Mammary epithelial cell (primary cell): ENCODE measurements at regions of chr2 and their contacts with region 1.

Region 1: GRCh38 chr2:10457911-10458604 is 9.9 kb upstream of the ODC1 start:
- DNase-seq: peak; percentile 90
- H3K4me3 ChIP-seq: no peak overlapping the region
- H3K27ac ChIP-seq: peak overlapping the region; percentile 56
- H3K4me1 ChIP-seq: peaks cover 36% of the 10 kb centered on the region
- H3K27me3 ChIP-seq: no peaks in the 10 kb centered on the region
- CTCF ChIP-seq: no peak

Region 2: DNA sequence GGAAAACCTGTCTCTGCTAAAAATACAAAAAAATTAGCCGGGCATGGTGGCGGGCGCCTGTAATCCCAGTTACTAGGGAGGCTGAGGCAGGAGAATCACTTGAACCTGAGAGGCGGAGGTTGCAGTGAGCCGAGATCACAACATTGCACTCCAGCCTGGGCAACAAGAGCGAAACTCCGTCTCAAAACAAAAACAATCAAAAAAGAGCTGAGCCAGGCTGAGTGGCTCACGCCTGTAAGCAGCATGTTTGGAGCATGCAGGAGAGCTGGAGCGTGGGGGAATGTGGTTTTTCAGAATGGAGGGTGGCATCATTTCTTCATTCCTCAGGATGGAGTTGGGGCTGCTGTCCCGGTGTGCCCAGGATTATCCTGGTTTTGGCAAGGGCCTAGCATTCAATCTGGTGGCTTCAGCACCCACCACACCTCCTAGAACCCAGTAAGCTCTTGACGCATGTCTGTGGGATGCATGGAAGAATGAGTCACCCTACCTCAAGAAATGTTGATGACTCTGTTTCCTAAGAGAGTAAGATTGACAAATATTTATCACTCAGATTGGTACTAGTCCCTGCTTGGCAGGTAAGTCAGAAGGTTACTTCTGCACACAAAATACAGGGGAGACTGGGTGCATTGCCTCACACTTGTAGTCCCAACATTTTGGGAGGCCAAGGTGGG is 80.3 kb after region 1 on chr2:
- CTCF ChIA-PET with region 1: no interaction called
- dilution Hi-C with region 1: no loop called
- in situ Hi-C with region 1: no loop called
- intact Hi-C with region 1: no loop called
- DNase-seq: peak; percentile 92
- H3K4me3 ChIP-seq: no peak overlapping the region
- H3K27ac ChIP-seq: peak overlapping the region; percentile 30
- H3K4me1 ChIP-seq: peaks cover 14% of the 10 kb centered on the region
- H3K27me3 ChIP-seq: no peaks in the 10 kb centered on the region
- CTCF ChIP-seq: no peak

Region 3: GRCh38 chr2:10575609-10576280 is 117.7 kb after region 1 on chr2:
- CTCF ChIA-PET with region 1: no interaction called
- dilution Hi-C with region 1: no loop called
- in situ Hi-C with region 1: no loop called
- intact Hi-C with region 1: loop called (anchors 2 kb)
- DNase-seq: peak; percentile 92
- H3K4me3 ChIP-seq: no peak overlapping the region
- H3K27ac ChIP-seq: peak overlapping the region; percentile 95
- H3K4me1 ChIP-seq: peaks cover 47% of the 10 kb centered on the region
- H3K27me3 ChIP-seq: no peaks in the 10 kb centered on the region
- CTCF ChIP-seq: no peak

Region 4: GRCh38 chr2:10584796-10585475 is 126.9 kb after region 1 on chr2:
- CTCF ChIA-PET with region 1: no interaction called
- dilution Hi-C with region 1: no loop called
- in situ Hi-C with region 1: no loop called
- intact Hi-C with region 1: loop called (anchors 2 kb)
- DNase-seq: peak; percentile 96
- H3K4me3 ChIP-seq: no peak overlapping the region
- H3K27ac ChIP-seq: peak overlapping the region; percentile 96
- H3K4me1 ChIP-seq: peaks cover 25% of the 10 kb centered on the region
- H3K27me3 ChIP-seq: no peaks in the 10 kb centered on the region
- CTCF ChIP-seq: no peak